ENCODE measurements at regions of chr5 and their contacts with region 1.

Region 1: GRCh38 chr5:134904630-134905245 is at the start of gene PCBD2:
- DNase-seq: peak; percentile 72
- ATAC-seq: peak; percentile 93
- H3K4me3 ChIP-seq: peak within 1 kb of the TSS; percentile 70 to 75
- H3K27ac ChIP-seq: peak within 1 kb of the TSS; percentile 93
- H3K4me1 ChIP-seq: peaks cover 7% of the 10 kb centered on the region; the same call in 1 of the 2 replicates
- H3K27me3 ChIP-seq: no peaks in the 10 kb centered on the region
- CTCF ChIP-seq: peak; percentile 99
- total RNA-seq, gene PCBD2: 19.8 TPM

Region 2: DNA sequence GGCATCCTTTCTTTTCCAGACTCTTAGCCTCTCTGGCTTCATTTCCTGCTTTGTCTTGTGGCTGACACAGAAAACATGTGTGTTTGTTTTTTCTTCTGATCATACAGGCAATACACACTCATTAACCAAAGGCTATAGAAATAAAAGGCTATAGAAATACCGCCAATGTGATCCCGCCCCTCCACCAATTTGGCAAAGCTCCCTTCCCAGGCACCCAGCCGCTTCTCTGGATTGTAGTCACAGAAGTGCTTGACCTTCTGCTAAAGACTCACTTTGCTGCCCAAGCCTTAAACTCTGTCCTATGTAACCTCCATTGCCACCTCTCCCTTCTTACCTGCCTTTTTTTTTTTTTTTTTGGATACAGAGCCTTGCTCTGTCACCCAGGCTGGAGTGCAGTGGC is 25.3 kb before region 1 on chr5:
- CTCF ChIA-PET with region 1: no interaction called
- POLR2A ChIA-PET with region 1: interaction called, 12 read pairs
- in situ Hi-C with region 1: no loop called
- intact Hi-C with region 1: no loop called
- DNase-seq: no peak
- ATAC-seq: no peak
- H3K4me3 ChIP-seq: no peak overlapping the region
- H3K27ac ChIP-seq: no peak overlapping the region
- H3K4me1 ChIP-seq: peaks cover 6% of the 10 kb centered on the region
- H3K27me3 ChIP-seq: no peaks in the 10 kb centered on the region
- CTCF ChIP-seq: no peak

Region 3: DNA sequence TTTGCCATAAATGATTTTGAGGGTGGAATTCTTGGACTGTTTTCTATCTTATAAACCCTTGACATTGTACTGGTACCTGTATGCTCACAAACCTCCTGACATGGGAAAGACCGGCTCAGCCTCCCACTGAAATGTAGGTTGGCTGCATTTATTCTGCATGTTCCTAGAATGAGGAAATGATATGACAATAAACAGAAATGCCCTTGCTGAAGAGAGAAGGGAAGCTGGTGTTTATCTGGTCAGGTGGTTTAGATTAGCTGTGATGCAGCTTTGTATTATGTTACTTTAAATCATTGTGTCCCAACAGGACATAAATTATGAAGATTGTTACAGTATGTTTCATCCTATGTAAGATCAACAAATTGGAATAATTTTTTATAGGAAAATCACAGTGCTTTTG is 39.9 kb after region 1 on chr5:
- CTCF ChIA-PET with region 1: no interaction called
- POLR2A ChIA-PET with region 1: interaction called, 10 read pairs
- in situ Hi-C with region 1: no loop called
- intact Hi-C with region 1: no loop called
- DNase-seq: no peak
- ATAC-seq: no peak
- H3K4me3 ChIP-seq: no peak overlapping the region
- H3K27ac ChIP-seq: no peak overlapping the region
- H3K4me1 ChIP-seq: no peaks in the 10 kb centered on the region
- H3K27me3 ChIP-seq: no peaks in the 10 kb centered on the region
- CTCF ChIP-seq: no peak

Region 4: GRCh38 chr5:135015942-135016341 is 111.2 kb after region 1 on chr5:
- CTCF ChIA-PET with region 1: interaction called, 10 read pairs
- POLR2A ChIA-PET with region 1: no interaction called
- in situ Hi-C with region 1: no loop called
- intact Hi-C with region 1: no loop called
- DNase-seq: no peak
- ATAC-seq: no peak
- H3K4me3 ChIP-seq: no peak overlapping the region
- H3K27ac ChIP-seq: no peak overlapping the region
- H3K4me1 ChIP-seq: peaks cover 12% of the 10 kb centered on the region
- H3K27me3 ChIP-seq: no peaks in the 10 kb centered on the region
- CTCF ChIP-seq: no peak

Measured in Panc1 (cell line).